Activated CD4-positive, alpha-beta memory T cell treated with anti-CD3 and anti-CD28 coated beads for 36 hours (primary cell): ENCODE measurements at regions of chr22 and their contacts with region 1.

Region 1: GRCh38 chr22:30224161-30224857 is 22.2 kb downstream of the LIF start:
- DNase-seq: no peak
- H3K4me3 Mint-ChIP-seq: no peak overlapping the region
- H3K27ac Mint-ChIP-seq: no peak overlapping the region
- H3K4me1 Mint-ChIP-seq: peaks cover 69% of the 10 kb centered on the region
- H3K27me3 Mint-ChIP-seq: no peaks in the 10 kb centered on the region

Region 2: GRCh38 chr22:30212363-30212995 is 11.8 kb before region 1 on chr22:
- CTCF ChIA-PET with region 1: no interaction called
- POLR2A ChIA-PET with region 1: no interaction called
- intact Hi-C with region 1: loop called (anchors 1 kb)
- DNase-seq: peak; percentile 57
- H3K4me3 Mint-ChIP-seq: no peak overlapping the region
- H3K27ac Mint-ChIP-seq: peak overlapping the region; percentile 1
- H3K4me1 Mint-ChIP-seq: peaks cover 13% of the 10 kb centered on the region
- H3K27me3 Mint-ChIP-seq: no peaks in the 10 kb centered on the region

Region 3: GRCh38 chr22:30241576-30242371 is 17.5 kb after region 1 on chr22:
- CTCF ChIA-PET with region 1: no interaction called
- POLR2A ChIA-PET with region 1: no interaction called
- intact Hi-C with region 1: no loop called
- DNase-seq: no peak
- H3K4me3 Mint-ChIP-seq: peak overlapping the region; percentile 53
- H3K27ac Mint-ChIP-seq: peak overlapping the region; percentile 66
- H3K4me1 Mint-ChIP-seq: peaks cover 50% of the 10 kb centered on the region
- H3K27me3 Mint-ChIP-seq: no peaks in the 10 kb centered on the region